GM12878 (cell line): ENCODE measurements at regions of chr17 and their contacts with region 1.

Region 1: GRCh38 chr17:73342050-73342522 is 30.3 kb upstream of the CDC42EP4 start:
- DNase-seq: peak; percentile 20
- ATAC-seq: peak; percentile 84
- H3K4me3 ChIP-seq: no peak overlapping the region
- H3K27ac ChIP-seq: no peak overlapping the region
- H3K4me1 ChIP-seq: no peaks in the 10 kb centered on the region
- H3K27me3 ChIP-seq: no peaks in the 10 kb centered on the region
- CTCF ChIP-seq: no peak
- EP300 ChIP-seq: no peak
- POLR2A ChIP-seq: no peak
- RAD21 ChIP-seq: no peak

Region 2: GRCh38 chr17:73365906-73366623 is 24.0 kb after region 1 on chr17:
- CTCF ChIA-PET with region 1: interaction called, 39 read pairs
- POLR2A ChIA-PET with region 1: interaction called, 3 read pairs
- RAD21 ChIA-PET with region 1: interaction called, 14 read pairs
- SMC1A ChIA-PET with region 1: interaction called, 13 read pairs
- in situ Hi-C with region 1: no loop called
- intact Hi-C with region 1: no loop called
- DNase-seq: no peak
- ATAC-seq: peak; percentile 52
- H3K4me3 ChIP-seq: no peak overlapping the region
- H3K27ac ChIP-seq: no peak overlapping the region
- H3K4me1 ChIP-seq: no peaks in the 10 kb centered on the region
- H3K27me3 ChIP-seq: peaks cover 0 to 2% of the 10 kb centered on the region in 2 experiments; a peak in 2 of 4 replicates
- CTCF ChIP-seq: no peak; a peak in 1 of 6 replicates
- EP300 ChIP-seq: no peak
- POLR2A ChIP-seq: no peak
- RAD21 ChIP-seq: no peak